Activated T-helper 1 cell treated with anti-CD3 and anti-CD28 coated beads, Interleukin-12 subunit alpha, Interleukin-12 subunit beta, Interleukin-2, Interleukin-4 antibody, amounts not matched to agents 30 ng/mL and 10 ng/mL and 1 ng/mL, durations not matched to agents 14 hours and 24 hours and 36 hours (primary cell): ENCODE measurements at regions of chr1 and their contacts with region 1.

Region 1: GRCh38 chr1:67214420-67215174 is 48.3 kb downstream of the IL23R start:
- DNase-seq: peak; percentile 42
- H3K4me3 Mint-ChIP-seq: peak overlapping the region; percentile 43
- H3K27ac Mint-ChIP-seq: peak overlapping the region; percentile 61
- H3K4me1 Mint-ChIP-seq: peaks cover 65% of the 10 kb centered on the region
- H3K27me3 Mint-ChIP-seq: no peaks in the 10 kb centered on the region

Region 2: DNA sequence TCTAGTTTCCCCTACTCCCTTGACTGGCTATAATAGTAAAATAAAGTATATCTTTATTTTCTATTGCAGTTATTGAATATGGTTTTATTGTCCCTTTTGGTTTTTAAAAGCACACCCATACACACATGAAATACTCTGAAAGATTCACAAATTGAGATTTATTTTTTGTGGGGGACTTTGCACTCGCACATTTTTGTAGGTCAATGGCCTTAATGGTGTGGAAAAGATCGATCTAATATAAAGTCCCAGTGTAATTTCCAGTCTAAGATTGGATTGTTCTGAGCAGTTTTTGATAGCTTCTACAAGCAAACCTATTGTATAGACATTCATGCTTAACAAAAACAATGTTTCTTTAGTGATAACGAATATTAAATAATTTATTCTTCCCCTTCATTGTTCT is 354.1 kb before region 1 on chr1:
- intact Hi-C with region 1: no loop called
- DNase-seq: no peak
- H3K4me3 Mint-ChIP-seq: no peak overlapping the region
- H3K27ac Mint-ChIP-seq: no peak overlapping the region
- H3K4me1 Mint-ChIP-seq: no peaks in the 10 kb centered on the region
- H3K27me3 Mint-ChIP-seq: peaks cover 7% of the 10 kb centered on the region

Region 3: GRCh38 chr1:66996018-66996682 is 218.4 kb before region 1 on chr1:
- intact Hi-C with region 1: loop called (anchors 1 kb)
- DNase-seq: peak; percentile 56
- H3K4me3 Mint-ChIP-seq: no peak overlapping the region
- H3K27ac Mint-ChIP-seq: peak overlapping the region; percentile 45
- H3K4me1 Mint-ChIP-seq: peaks cover 22% of the 10 kb centered on the region
- H3K27me3 Mint-ChIP-seq: no peaks in the 10 kb centered on the region

Region 4: DNA sequence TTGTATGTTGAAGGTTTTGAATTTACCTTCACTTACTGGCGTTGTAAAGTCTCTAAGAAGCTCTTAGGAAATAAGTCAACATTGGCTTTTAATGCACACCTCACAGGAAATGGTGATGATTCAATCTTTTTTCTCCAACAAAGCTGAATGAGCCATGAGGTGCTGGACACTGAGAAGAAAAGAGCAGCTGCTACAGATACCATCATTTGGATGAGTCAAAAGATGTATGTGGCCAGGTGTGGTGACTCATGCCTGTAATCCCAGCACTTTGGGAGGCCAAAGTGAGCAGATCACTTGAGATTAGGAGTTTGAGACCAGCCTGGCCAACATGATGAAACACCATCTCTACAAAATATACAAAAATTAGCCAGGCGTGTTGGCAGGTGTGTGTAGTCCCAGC is 51.6 kb before region 1 on chr1:
- intact Hi-C with region 1: loop called (anchors 1 kb)
- DNase-seq: peak; percentile 62
- H3K4me3 Mint-ChIP-seq: peak overlapping the region; percentile 55
- H3K27ac Mint-ChIP-seq: peak overlapping the region; percentile 93
- H3K4me1 Mint-ChIP-seq: peaks cover 65% of the 10 kb centered on the region
- H3K27me3 Mint-ChIP-seq: no peaks in the 10 kb centered on the region

Region 5: GRCh38 chr1:67230539-67230938 is 15.9 kb after region 1 on chr1:
- intact Hi-C with region 1: loop called (anchors 1 kb)
- DNase-seq: no peak
- H3K4me3 Mint-ChIP-seq: no peak overlapping the region
- H3K27ac Mint-ChIP-seq: no peak overlapping the region
- H3K4me1 Mint-ChIP-seq: peaks cover 35% of the 10 kb centered on the region
- H3K27me3 Mint-ChIP-seq: no peaks in the 10 kb centered on the region

Region 6: DNA sequence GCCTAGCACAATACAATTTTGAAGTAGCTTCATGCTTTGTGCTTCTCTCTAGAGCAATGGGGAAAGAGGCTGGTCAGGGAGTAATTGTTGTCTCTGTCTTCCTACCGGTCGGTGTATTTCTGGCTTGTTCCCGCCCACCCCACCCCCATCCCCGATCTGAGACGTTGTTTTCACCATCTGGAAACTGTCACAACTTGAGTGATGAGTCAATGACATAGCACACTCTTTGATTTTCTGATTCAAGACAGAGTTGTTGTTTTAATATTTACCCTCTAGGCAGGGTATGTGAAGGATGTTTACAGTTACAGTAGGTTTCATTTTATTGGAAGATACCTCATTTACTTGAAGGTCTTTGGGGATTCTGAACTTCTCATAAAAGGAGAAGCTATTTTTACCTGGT is 100.1 kb after region 1 on chr1:
- intact Hi-C with region 1: loop called (anchors 2 kb)
- DNase-seq: no peak
- H3K4me3 Mint-ChIP-seq: peak overlapping the region; percentile 100
- H3K27ac Mint-ChIP-seq: peak overlapping the region; percentile 97
- H3K4me1 Mint-ChIP-seq: peaks cover 6% of the 10 kb centered on the region
- H3K27me3 Mint-ChIP-seq: no peaks in the 10 kb centered on the region

Region 7: DNA sequence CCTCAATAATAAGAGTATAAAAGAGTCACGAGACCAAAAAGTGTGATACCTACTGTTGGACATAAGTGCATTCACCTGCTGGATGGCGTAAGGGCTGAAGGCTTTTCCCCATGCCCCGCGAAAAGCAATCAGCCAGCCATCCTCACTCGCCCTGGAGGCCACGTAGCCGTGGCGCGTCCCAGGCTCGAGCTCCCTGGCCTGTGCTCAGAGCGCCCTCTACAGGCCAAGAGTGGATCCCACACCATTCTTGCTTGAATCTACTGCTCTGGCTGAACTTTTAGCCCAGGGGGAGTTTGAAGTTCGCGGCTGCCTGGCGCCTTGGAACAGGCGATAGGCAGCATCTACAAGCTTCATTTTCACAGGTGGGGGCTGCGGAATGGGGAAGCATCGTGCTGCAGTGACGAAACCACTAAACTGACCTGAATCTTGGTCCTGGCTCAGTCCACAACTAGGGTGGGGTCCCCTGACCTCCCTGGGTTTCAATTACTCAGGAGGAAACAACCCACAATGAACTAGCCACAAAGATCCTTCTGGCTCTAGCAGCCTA is 285.9 kb after region 1 on chr1:
- intact Hi-C with region 1: loop called (anchors 1 kb)
- DNase-seq: peak; percentile 84
- H3K4me3 Mint-ChIP-seq: no peak overlapping the region
- H3K27ac Mint-ChIP-seq: no peak overlapping the region
- H3K4me1 Mint-ChIP-seq: peaks cover 9% of the 10 kb centered on the region
- H3K27me3 Mint-ChIP-seq: peaks cover 9% of the 10 kb centered on the region